ENCODE measurements at regions of chr6 and their contacts with region 1.

Region 1: GRCh38 chr6:27809939-27810767 is 102.0 kb downstream of the OR2B2 start:
- DNase-seq: peak; percentile 95

Region 2: GRCh38 chr6:27157459-27158315 is 652.5 kb before region 1 on chr6:
- in situ Hi-C with region 1: loop called (anchors 25 kb)
- DNase-seq: peak; percentile 82

Region 3: GRCh38 chr6:27241443-27241842 is 568.7 kb before region 1 on chr6:
- in situ Hi-C with region 1: no loop called
- DNase-seq: no peak

Region 4: DNA sequence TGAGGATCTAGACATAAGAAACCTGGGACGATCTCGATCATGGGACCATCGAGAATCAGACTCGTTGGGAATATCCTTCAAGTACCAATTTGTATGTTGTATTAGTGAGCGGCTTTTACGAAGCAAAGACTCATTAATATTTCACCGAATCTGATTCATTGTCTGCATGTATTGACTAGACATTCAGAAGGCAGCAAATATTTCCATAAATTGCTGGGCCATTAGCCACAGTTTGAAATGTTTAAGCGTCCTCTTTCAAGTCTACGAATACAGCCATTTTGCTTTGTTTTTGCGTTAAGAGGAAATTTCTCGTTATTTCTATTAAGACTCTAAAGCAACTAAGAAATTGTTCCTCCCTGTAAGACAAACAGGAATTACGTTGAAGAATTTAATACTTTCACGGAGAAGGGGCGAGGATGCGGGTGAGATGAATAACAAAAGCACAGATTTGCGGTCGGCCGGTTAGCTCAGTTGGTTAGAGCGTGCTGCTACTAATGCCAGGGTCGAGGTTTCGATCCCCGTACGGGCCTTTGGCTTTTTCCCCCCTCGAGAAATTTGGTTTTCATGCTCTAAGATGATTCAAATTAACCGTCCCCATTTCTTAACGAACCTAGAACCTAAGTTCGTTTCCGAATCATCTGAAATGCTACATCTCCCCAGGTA is 516.6 kb before region 1 on chr6:
- in situ Hi-C with region 1: no loop called
- DNase-seq: no peak

Region 5: GRCh38 chr6:28683944-28684538 is 873.9 kb after region 1 on chr6:
- in situ Hi-C with region 1: no loop called
- DNase-seq: peak; percentile 72